IMR-90 (cell line): ENCODE measurements at regions of chrX and their contacts with region 1.

Region 1: DNA sequence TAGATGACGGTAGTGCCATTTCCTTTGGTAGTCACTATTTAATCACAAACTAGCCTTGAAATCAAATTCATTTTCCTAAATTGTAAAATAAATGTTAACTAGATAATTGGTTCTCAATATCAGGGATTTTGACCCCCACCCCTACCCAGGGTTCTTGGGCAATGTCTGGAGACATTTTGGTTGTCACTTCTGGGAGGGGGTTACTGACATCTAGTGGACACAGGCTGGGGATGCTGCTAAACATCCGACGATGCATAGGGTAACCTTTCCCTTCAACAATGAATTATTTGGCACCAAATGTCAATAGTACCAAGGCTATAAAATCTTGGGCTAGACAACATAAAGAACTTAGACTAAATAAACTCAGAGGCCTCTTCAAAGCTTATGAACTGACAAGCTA is 285.8 kb upstream of the TRPC5 start:
- DNase-seq: no peak
- ATAC-seq: no peak
- H3K4me3 ChIP-seq: no peak overlapping the region
- H3K27ac ChIP-seq: no peak overlapping the region
- H3K4me1 ChIP-seq: no peaks in the 10 kb centered on the region
- H3K27me3 ChIP-seq: peaks cover 3% of the 10 kb centered on the region; the same call in 1 of the 2 replicates
- CTCF ChIP-seq: peak; percentile 31; the same call in 1 of the 2 replicates
- POLR2A ChIP-seq: no peak
- RAD21 ChIP-seq: peak; percentile 42

Region 2: DNA sequence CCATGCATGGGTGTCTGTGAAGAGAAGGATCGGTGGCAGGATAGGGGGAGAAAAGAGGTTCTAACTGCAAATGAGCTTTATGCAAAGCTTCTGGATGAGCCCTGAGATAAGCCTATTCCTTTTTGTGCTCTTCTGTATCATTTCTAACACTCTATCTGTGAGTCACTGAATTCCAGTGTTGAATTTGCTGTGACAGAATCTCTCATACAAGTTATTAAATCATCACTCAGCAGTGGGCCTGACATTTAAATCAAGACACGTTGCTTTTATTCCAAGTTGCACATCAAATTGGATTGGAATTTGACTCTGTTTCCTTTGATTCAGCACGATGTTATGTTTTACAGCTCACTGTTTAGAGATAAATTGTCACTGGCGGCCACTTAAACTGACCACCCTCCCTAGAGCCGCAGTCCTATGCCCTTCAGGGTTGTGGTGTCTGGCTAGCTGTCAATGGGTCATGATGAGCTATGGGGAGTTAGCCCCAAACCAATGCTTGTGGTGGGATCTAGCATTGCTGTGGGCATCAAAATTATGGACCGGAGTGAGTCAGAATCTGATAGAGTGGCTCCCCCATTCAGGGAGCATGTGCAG is 268.7 kb after region 1 on chrX:
- CTCF ChIA-PET with region 1: no interaction called
- POLR2A ChIA-PET with region 1: no interaction called
- dilution Hi-C with region 1: no loop called
- in situ Hi-C with region 1: no loop called
- intact Hi-C with region 1: loop called (anchors 10 kb)
- DNase-seq: peak; percentile 87
- ATAC-seq: peak; percentile 79
- H3K4me3 ChIP-seq: no peak overlapping the region
- H3K27ac ChIP-seq: peak overlapping the region; percentile 96
- H3K4me1 ChIP-seq: peaks cover 8% of the 10 kb centered on the region; the same call in 1 of the 2 replicates
- H3K27me3 ChIP-seq: no peaks in the 10 kb centered on the region; the same call in 1 of the 2 replicates
- CTCF ChIP-seq: no peak
- POLR2A ChIP-seq: no peak
- RAD21 ChIP-seq: no peak